Mammary epithelial cell (primary cell): ENCODE measurements at regions of chr17 and their contacts with region 1.

Region 1: DNA sequence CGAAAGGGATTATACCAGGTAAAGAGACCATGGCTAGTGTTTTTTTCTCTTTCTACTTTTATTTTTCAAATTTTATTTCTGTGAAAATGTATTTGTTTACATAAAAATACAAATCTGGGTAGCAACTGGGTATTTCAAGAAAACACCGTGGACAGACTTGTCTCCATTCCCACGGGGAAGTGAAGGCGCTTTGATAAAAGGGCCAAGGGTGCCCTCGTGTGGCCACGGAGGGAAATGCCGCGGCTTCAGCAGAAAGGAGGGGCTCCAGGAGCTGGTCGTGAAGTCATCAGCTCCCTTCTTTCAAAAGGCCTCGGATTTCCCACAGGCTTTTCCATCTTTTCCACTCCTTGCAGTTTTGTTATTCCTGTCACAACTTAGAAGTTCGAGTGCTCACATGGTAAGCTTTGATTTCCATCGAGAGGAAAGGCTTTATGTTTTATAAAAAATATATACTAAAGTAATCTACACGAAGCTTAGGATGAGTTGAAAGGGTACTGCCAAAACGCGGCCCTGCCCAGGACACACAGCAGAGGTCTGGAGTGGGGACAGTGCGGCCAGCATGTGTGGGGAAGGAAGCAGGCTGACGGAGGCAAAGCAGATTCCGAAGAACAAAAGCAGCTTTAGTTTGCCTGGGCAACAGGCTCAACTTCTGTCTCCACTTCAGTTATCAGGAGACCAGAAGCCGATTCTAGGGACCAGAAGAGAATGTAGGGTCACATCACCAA is 15.3 kb upstream of the MNT start:
- DNase-seq: peak; percentile 73
- H3K4me3 ChIP-seq: no peak overlapping the region
- H3K27ac ChIP-seq: peak overlapping the region; percentile 47
- H3K4me1 ChIP-seq: no peaks in the 10 kb centered on the region
- H3K27me3 ChIP-seq: no peaks in the 10 kb centered on the region
- CTCF ChIP-seq: peak; percentile 91 to 95

Region 2: DNA sequence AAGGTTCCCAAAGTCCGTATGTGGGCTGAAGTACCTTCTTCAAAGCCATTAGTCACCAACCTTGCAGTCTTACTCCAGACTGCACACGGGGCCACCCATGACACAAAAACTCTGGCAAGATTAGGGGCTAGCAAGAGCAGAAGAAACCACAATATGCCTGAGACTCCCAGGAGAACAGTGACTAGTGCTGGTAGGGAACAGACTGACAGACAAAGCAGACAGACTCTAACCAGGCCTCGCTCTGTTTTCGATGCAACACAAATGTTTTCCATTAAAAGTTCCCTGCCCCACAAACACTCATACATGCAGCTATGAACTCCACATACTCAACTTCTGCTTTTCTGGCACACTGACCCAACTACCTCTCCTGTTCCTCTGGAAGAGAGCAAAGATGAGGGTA is 259.1 kb before region 1 on chr17:
- CTCF ChIA-PET with region 1: no interaction called
- dilution Hi-C with region 1: no loop called
- in situ Hi-C with region 1: no loop called
- intact Hi-C with region 1: no loop called
- DNase-seq: no peak
- H3K4me3 ChIP-seq: no peak overlapping the region
- H3K27ac ChIP-seq: no peak overlapping the region
- H3K4me1 ChIP-seq: peaks cover 17% of the 10 kb centered on the region
- H3K27me3 ChIP-seq: no peaks in the 10 kb centered on the region
- CTCF ChIP-seq: no peak

Region 3: DNA sequence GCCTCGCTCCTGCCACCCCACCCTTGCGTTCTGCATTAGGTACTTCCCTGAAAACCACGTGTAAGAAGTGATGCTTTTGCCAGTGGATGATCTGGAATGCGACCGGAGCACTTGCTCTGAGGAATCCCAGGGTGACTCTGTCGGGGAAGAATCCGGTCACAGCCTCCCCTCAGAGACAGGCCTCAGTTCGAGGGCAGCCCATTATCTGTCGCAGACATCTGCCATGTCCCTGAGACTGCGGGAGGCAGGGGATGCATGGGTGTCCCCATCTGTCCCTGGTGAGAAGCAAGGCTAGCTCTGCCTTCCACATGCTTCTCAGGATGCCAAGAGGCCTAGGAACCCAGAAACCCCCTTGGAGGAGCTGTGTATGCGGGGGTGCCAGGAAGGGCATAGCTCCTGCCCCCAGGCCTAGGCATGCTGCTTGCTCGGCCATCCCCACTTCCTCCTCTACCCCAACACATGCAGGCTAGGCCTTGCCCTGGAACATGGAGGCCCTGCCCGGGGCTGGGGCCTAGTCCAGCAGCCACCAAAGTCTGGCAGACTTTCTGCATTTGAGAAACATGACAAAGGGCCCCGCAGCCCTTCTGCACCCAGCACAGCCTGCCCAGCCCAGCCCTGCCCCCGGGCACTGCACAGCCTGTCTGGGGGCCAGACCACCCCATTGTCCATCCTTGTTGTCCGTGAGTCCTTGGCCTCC is 35.8 kb before region 1 on chr17:
- CTCF ChIA-PET with region 1: interaction called, 60 read pairs
- dilution Hi-C with region 1: loop called (anchors 5 kb)
- in situ Hi-C with region 1: no loop called
- intact Hi-C with region 1: loop called (anchors 1 kb)
- DNase-seq: no peak
- H3K4me3 ChIP-seq: no peak overlapping the region
- H3K27ac ChIP-seq: no peak overlapping the region
- H3K4me1 ChIP-seq: peaks cover 14% of the 10 kb centered on the region
- H3K27me3 ChIP-seq: no peaks in the 10 kb centered on the region
- CTCF ChIP-seq: no peak

Region 4: GRCh38 chr17:2452216-2452750 is 36.1 kb after region 1 on chr17:
- CTCF ChIA-PET with region 1: interaction called, 28 read pairs
- dilution Hi-C with region 1: no loop called
- in situ Hi-C with region 1: no loop called
- intact Hi-C with region 1: no loop called
- DNase-seq: no peak
- H3K4me3 ChIP-seq: no peak overlapping the region
- H3K27ac ChIP-seq: no peak overlapping the region
- H3K4me1 ChIP-seq: no peaks in the 10 kb centered on the region
- H3K27me3 ChIP-seq: no peaks in the 10 kb centered on the region
- CTCF ChIP-seq: no peak

Region 5: GRCh38 chr17:2484876-2485275 is 68.7 kb after region 1 on chr17:
- CTCF ChIA-PET with region 1: no interaction called
- dilution Hi-C with region 1: loop called (anchors 10 kb)
- in situ Hi-C with region 1: no loop called
- intact Hi-C with region 1: no loop called
- DNase-seq: peak; percentile 85
- H3K4me3 ChIP-seq: peak overlapping the region; percentile 13 to 35 (median 30)
- H3K27ac ChIP-seq: peak overlapping the region; percentile 43
- H3K4me1 ChIP-seq: peaks cover 20% of the 10 kb centered on the region
- H3K27me3 ChIP-seq: no peaks in the 10 kb centered on the region
- CTCF ChIP-seq: peak in 1 of 2 donors; percentile 10